Naive thymus-derived CD4-positive, alpha-beta T cell (primary cell): ENCODE measurements at regions of chr1 and their contacts with region 1.

Region 1: GRCh38 chr1:92858564-92859399 is 26.9 kb downstream of the RPL5 start:
- DNase-seq: peak in 8 of 9 donors; percentile 32 to 86 (median 80)
- ATAC-seq: peak; percentile 100
- H3K4me3 ChIP-seq: peak overlapping the region; percentile 17
- H3K4me3 Mint-ChIP-seq: peak overlapping the region; percentile 5 to 80 (median 70)
- H3K27ac ChIP-seq: peak overlapping the region; percentile 43
- H3K27ac Mint-ChIP-seq: peak overlapping the region; percentile 29 to 83 (median 55)
- H3K4me1 ChIP-seq: peaks cover 0 to 3% of the 10 kb centered on the region in 2 donors
- H3K4me1 Mint-ChIP-seq: peaks cover 15 to 32% (median 22%) of the 10 kb centered on the region in 7 donors
- H3K27me3 ChIP-seq: no peaks in the 10 kb centered on the region
- H3K27me3 Mint-ChIP-seq: no peaks in the 10 kb centered on the region

Region 2: GRCh38 chr1:91234181-91234580 is 1624.6 kb before region 1 on chr1:
- CTCF ChIA-PET with region 1: no interaction called
- POLR2A ChIA-PET with region 1: no interaction called
- intact Hi-C with region 1: no loop called
- DNase-seq: no peak
- ATAC-seq: no peak
- H3K4me3 ChIP-seq: no peak overlapping the region
- H3K4me3 Mint-ChIP-seq: no peak overlapping the region
- H3K27ac ChIP-seq: no peak overlapping the region
- H3K27ac Mint-ChIP-seq: no peak overlapping the region
- H3K4me1 ChIP-seq: no peaks in the 10 kb centered on the region
- H3K4me1 Mint-ChIP-seq: no peaks in the 10 kb centered on the region
- H3K27me3 ChIP-seq: no peaks in the 10 kb centered on the region
- H3K27me3 Mint-ChIP-seq: peaks cover 0 to 19% (median 11%) of the 10 kb centered on the region in 5 donors

Region 3: DNA sequence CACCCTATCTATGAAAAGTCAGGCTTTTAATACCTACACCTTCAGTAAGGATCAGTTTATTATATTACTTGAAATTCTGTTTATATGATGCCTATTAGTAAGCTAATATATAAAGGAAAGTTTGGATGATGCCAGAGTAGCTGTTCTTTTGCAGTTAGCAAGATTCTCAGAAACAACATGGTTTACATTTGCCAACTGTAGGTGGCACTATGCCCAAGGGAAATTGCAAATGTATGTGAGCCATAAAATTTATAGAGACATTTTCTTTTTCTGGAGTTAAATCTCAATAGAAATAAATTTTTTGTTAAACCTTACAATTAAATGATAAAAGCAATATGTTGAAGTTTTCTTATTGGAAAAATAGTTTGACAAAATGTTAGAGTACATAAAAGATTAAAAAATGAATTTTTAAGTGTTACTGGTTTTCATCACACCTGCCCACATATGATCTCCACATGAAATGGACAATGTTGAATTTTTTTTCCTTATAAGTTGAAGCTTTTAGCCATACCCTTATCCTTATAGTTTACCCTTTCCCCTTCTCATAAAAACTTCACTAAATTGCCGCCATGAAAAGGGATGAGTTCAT is 861.1 kb before region 1 on chr1:
- CTCF ChIA-PET with region 1: no interaction called
- POLR2A ChIA-PET with region 1: no interaction called
- intact Hi-C with region 1: loop called in 1 of 2 experiments (anchors 1 kb)
- DNase-seq: peak in 7 of 9 donors; percentile 26 to 64 (median 49)
- ATAC-seq: peak; percentile 64
- H3K4me3 ChIP-seq: no peak overlapping the region
- H3K4me3 Mint-ChIP-seq: no peak overlapping the region
- H3K27ac ChIP-seq: no peak overlapping the region
- H3K27ac Mint-ChIP-seq: no peak overlapping the region
- H3K4me1 ChIP-seq: no peaks in the 10 kb centered on the region
- H3K4me1 Mint-ChIP-seq: no peaks in the 10 kb centered on the region
- H3K27me3 ChIP-seq: no peaks in the 10 kb centered on the region
- H3K27me3 Mint-ChIP-seq: peaks cover 0 to 10% (median 0%) of the 10 kb centered on the region in 5 donors

Region 4: DNA sequence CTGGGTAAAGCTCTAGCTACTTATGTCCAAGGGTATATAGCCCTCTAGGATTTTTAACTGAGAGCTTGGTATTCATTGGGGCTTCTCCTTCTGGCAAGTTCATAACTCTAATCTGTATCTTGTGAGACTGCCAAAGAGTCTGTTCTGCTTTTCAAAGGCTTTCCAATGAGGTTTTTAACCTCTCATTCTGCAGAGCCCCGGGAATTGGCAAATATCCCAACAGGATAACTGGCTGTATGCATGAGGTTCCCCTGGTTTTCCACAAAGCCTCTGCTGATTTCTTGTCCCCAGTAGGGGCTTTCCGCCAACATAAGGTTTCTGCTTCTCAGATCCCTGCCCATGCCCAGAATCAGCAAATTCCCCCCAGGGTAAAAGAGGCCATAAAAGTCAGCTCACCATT is 13.9 kb after region 1 on chr1:
- CTCF ChIA-PET with region 1: interaction called, 21 read pairs
- POLR2A ChIA-PET with region 1: interaction called, 9 read pairs
- intact Hi-C with region 1: no loop called
- DNase-seq: no peak
- ATAC-seq: no peak
- H3K4me3 ChIP-seq: no peak overlapping the region
- H3K4me3 Mint-ChIP-seq: no peak overlapping the region
- H3K27ac ChIP-seq: no peak overlapping the region
- H3K27ac Mint-ChIP-seq: peak overlapping the region in 1 of 9 donors; percentile 41
- H3K4me1 ChIP-seq: peaks cover 8 to 17% of the 10 kb centered on the region in 2 donors
- H3K4me1 Mint-ChIP-seq: peaks cover 10 to 45% (median 39%) of the 10 kb centered on the region in 7 donors
- H3K27me3 ChIP-seq: no peaks in the 10 kb centered on the region
- H3K27me3 Mint-ChIP-seq: no peaks in the 10 kb centered on the region

Region 5: GRCh38 chr1:92882819-92883218 is 24.0 kb after region 1 on chr1:
- CTCF ChIA-PET with region 1: interaction called, 14 read pairs
- POLR2A ChIA-PET with region 1: interaction called, 3 read pairs
- intact Hi-C with region 1: no loop called
- DNase-seq: peak in 7 of 9 donors; percentile 43 to 65 (median 49)
- ATAC-seq: peak; percentile 95
- H3K4me3 ChIP-seq: no peak overlapping the region
- H3K4me3 Mint-ChIP-seq: peak overlapping the region in 9 of 10 donors; percentile 22 to 68 (median 51)
- H3K27ac ChIP-seq: peak overlapping the region; percentile 54
- H3K27ac Mint-ChIP-seq: peak overlapping the region; percentile 45 to 96 (median 92)
- H3K4me1 ChIP-seq: peaks cover 18 to 25% of the 10 kb centered on the region in 2 donors
- H3K4me1 Mint-ChIP-seq: peaks cover 24 to 61% (median 48%) of the 10 kb centered on the region in 7 donors
- H3K27me3 ChIP-seq: no peaks in the 10 kb centered on the region
- H3K27me3 Mint-ChIP-seq: no peaks in the 10 kb centered on the region

Region 6: GRCh38 chr1:92951141-92951582 is 92.4 kb after region 1 on chr1:
- CTCF ChIA-PET with region 1: interaction called, 8 read pairs
- POLR2A ChIA-PET with region 1: interaction called, 12 read pairs
- intact Hi-C with region 1: loop called in 1 of 2 experiments (anchors 2 kb)
- DNase-seq: peak in 7 of 9 donors; percentile 25 to 57 (median 40)
- ATAC-seq: peak; percentile 91
- H3K4me3 ChIP-seq: no peak overlapping the region
- H3K4me3 Mint-ChIP-seq: no peak overlapping the region
- H3K27ac ChIP-seq: no peak overlapping the region
- H3K27ac Mint-ChIP-seq: no peak overlapping the region
- H3K4me1 ChIP-seq: peaks cover 21 to 39% of the 10 kb centered on the region in 2 donors
- H3K4me1 Mint-ChIP-seq: peaks cover 34 to 53% (median 46%) of the 10 kb centered on the region in 7 donors
- H3K27me3 ChIP-seq: no peaks in the 10 kb centered on the region
- H3K27me3 Mint-ChIP-seq: no peaks in the 10 kb centered on the region

Region 7: GRCh38 chr1:92980732-92981647 is 122.2 kb after region 1 on chr1:
- CTCF ChIA-PET with region 1: interaction called, 14 read pairs
- POLR2A ChIA-PET with region 1: interaction called, 5 read pairs
- intact Hi-C with region 1: no loop called
- DNase-seq: peak in 7 of 9 donors; percentile 69 to 91 (median 86)
- ATAC-seq: peak; percentile 98
- H3K4me3 ChIP-seq: peak overlapping the region; percentile 24
- H3K4me3 Mint-ChIP-seq: peak overlapping the region; percentile 5 to 83 (median 67)
- H3K27ac ChIP-seq: peak overlapping the region; percentile 81
- H3K27ac Mint-ChIP-seq: peak overlapping the region; percentile 93 to 99 (median 98)
- H3K4me1 ChIP-seq: peaks cover 19 to 33% of the 10 kb centered on the region in 2 donors
- H3K4me1 Mint-ChIP-seq: peaks cover 13 to 62% (median 26%) of the 10 kb centered on the region in 7 donors
- H3K27me3 ChIP-seq: no peaks in the 10 kb centered on the region
- H3K27me3 Mint-ChIP-seq: no peaks in the 10 kb centered on the region

Region 8: DNA sequence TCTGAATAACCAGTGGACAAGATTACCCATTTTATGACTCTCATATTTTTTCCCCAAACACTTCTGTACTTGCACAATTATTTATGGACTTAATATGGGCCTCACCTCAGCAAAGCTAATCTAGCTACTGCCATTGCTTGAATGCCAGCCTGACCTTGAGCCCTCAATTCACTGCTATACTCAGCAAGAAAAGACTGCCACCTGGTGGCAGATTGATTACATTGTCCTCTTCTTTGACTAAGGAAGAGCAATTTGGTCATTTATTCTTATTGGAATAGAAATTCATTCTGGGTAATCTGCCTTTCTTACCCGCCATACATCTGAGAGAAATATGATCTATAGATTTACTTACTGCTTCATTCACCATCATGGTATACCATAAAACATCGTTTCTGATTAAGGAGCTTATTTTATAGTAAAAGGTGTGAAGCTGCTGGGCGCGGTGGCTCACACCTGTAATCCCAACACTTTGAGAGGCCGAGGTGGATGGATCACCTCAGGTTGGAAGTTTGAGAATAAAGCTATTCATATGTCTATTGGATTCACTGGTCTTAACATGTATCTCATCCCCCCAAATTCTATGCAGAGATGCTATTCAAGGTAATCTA is 135.4 kb after region 1 on chr1:
- CTCF ChIA-PET with region 1: interaction called, 121 read pairs
- POLR2A ChIA-PET with region 1: interaction called, 15 read pairs
- intact Hi-C with region 1: loop called (anchors 1 kb)
- DNase-seq: peak; percentile 10 to 85 (median 76)
- ATAC-seq: peak; percentile 94
- H3K4me3 ChIP-seq: no peak overlapping the region
- H3K4me3 Mint-ChIP-seq: peak overlapping the region in 2 of 10 donors; percentile 23 to 30
- H3K27ac ChIP-seq: no peak overlapping the region
- H3K27ac Mint-ChIP-seq: peak overlapping the region in 8 of 9 donors; percentile 6 to 87 (median 62)
- H3K4me1 ChIP-seq: peaks cover 36 to 38% of the 10 kb centered on the region in 2 donors
- H3K4me1 Mint-ChIP-seq: peaks cover 21 to 50% (median 47%) of the 10 kb centered on the region in 7 donors
- H3K27me3 ChIP-seq: no peaks in the 10 kb centered on the region
- H3K27me3 Mint-ChIP-seq: peaks cover 0 to 3% (median 0%) of the 10 kb centered on the region in 5 donors

Region 9: GRCh38 chr1:94045465-94046056 is 1186.8 kb after region 1 on chr1:
- CTCF ChIA-PET with region 1: no interaction called
- POLR2A ChIA-PET with region 1: no interaction called
- intact Hi-C with region 1: no loop called
- DNase-seq: peak in 6 of 9 donors; percentile 14 to 39 (median 20)
- ATAC-seq: peak; percentile 56
- H3K4me3 ChIP-seq: no peak overlapping the region
- H3K4me3 Mint-ChIP-seq: peak overlapping the region in 9 of 10 donors; percentile 25 to 77 (median 68)
- H3K27ac ChIP-seq: no peak overlapping the region
- H3K27ac Mint-ChIP-seq: no peak overlapping the region
- H3K4me1 ChIP-seq: no peaks in the 10 kb centered on the region
- H3K4me1 Mint-ChIP-seq: peaks cover 0 to 10% (median 5%) of the 10 kb centered on the region in 7 donors
- H3K27me3 ChIP-seq: no peaks in the 10 kb centered on the region
- H3K27me3 Mint-ChIP-seq: peaks cover 0 to 28% (median 24%) of the 10 kb centered on the region in 5 donors